ENCODE measurements at regions of chr12 and their contacts with region 1.

Region 1: GRCh38 chr12:103548622-103549601 is 38.2 kb upstream of the STAB2 start:
- DNase-seq: peak; percentile 75
- H3K4me3 ChIP-seq: no peak overlapping the region
- H3K27ac ChIP-seq: no peak overlapping the region
- H3K4me1 ChIP-seq: no peaks in the 10 kb centered on the region
- H3K27me3 ChIP-seq: peaks cover 0 to 5% of the 10 kb centered on the region in 2 experiments
- CTCF ChIP-seq: peak; percentile 66 to 73
- POLR2A ChIP-seq: no peak

Region 2: GRCh38 chr12:102883204-102883799 is 665.6 kb before region 1 on chr12:
- CTCF ChIA-PET with region 1: interaction called, 7 read pairs
- POLR2A ChIA-PET with region 1: no interaction called
- dilution Hi-C with region 1: no loop called
- intact Hi-C with region 1: loop called (anchors 1 kb)
- DNase-seq: no peak
- H3K4me3 ChIP-seq: no peak overlapping the region
- H3K27ac ChIP-seq: no peak overlapping the region
- H3K4me1 ChIP-seq: no peaks in the 10 kb centered on the region
- H3K27me3 ChIP-seq: no peaks in the 10 kb centered on the region
- CTCF ChIP-seq: peak; percentile 29 to 40
- POLR2A ChIP-seq: no peak

Region 3: GRCh38 chr12:102948941-102949352 is 600.0 kb before region 1 on chr12:
- CTCF ChIA-PET with region 1: interaction called, 108 read pairs
- POLR2A ChIA-PET with region 1: no interaction called
- dilution Hi-C with region 1: no loop called
- intact Hi-C with region 1: loop called (anchors 1 kb)
- DNase-seq: peak; percentile 49
- H3K4me3 ChIP-seq: no peak overlapping the region
- H3K27ac ChIP-seq: no peak overlapping the region
- H3K4me1 ChIP-seq: no peaks in the 10 kb centered on the region
- H3K27me3 ChIP-seq: peaks cover 15 to 19% of the 10 kb centered on the region in 2 experiments
- CTCF ChIP-seq: peak; percentile 70 to 80
- POLR2A ChIP-seq: no peak

Region 4: GRCh38 chr12:103318533-103318932 is 230.4 kb before region 1 on chr12:
- CTCF ChIA-PET with region 1: no interaction called
- POLR2A ChIA-PET with region 1: no interaction called
- dilution Hi-C with region 1: no loop called
- intact Hi-C with region 1: no loop called
- DNase-seq: no peak
- H3K4me3 ChIP-seq: no peak overlapping the region
- H3K27ac ChIP-seq: no peak overlapping the region
- H3K4me1 ChIP-seq: no peaks in the 10 kb centered on the region
- H3K27me3 ChIP-seq: no peaks in the 10 kb centered on the region
- CTCF ChIP-seq: no peak
- POLR2A ChIP-seq: no peak

Region 5: DNA sequence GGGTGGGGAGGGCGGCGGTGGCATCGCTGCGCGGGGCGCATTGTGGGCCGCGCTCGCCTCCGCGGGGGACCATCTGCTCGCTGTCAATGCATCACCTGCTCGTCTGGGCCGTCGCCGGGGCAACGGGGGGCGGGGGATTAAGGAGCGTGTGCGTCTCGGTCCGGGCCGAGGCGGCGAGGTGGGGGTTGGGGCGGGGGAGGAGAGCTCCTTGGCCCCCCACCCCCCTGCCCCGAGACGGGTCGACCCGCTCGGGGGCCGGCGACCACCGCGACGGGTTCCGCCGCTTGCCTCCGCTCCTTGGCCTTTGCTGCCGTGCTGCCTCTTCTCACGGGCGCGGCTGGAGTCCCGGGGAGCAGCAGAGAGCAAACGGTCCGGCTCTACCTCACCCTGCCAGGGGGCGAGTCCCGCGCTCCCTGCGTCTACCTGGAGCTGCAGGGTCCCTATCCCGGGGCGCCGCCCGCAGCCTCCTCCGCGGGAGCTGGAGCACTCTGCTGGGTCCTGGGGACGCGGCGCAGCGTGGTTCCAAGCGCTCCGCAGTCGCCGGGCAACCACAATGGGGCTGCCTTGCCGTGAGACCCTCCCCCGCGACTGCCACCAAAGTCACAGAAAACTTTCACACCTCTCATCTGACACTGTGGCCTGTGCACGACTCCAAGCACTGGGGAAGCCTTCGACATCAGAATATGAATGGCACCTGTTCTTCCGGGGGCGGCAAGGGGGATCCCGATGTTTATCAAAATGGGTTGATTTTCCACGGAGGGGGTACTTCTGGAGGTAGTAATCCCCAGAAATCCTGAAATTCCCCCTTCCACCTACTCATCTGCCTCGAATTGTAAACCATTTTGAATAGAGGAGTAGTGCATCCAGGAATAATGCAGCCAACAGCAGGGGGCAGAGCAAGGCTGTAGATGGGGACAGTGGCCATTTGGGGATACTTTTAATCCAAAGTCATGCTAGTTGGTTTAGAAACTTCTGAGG is 53.1 kb before region 1 on chr12 and contains the start of gene C12orf42:
- CTCF ChIA-PET with region 1: interaction called, 4 read pairs
- POLR2A ChIA-PET with region 1: no interaction called
- dilution Hi-C with region 1: no loop called
- intact Hi-C with region 1: loop called (anchors 2 kb)
- DNase-seq: peak; percentile 5
- H3K4me3 ChIP-seq: no peak within 1 kb of the TSS
- H3K27ac ChIP-seq: no peak within 1 kb of the TSS
- H3K4me1 ChIP-seq: no peaks in the 10 kb centered on the region
- H3K27me3 ChIP-seq: peaks cover 0 to 4% of the 10 kb centered on the region in 2 experiments
- CTCF ChIP-seq: peak in 1 of 2 donors; percentile 17
- POLR2A ChIP-seq: no peak
- total RNA-seq, gene C12orf42: not detected in 2 replicates